Sigmoid colon (tissue), 7 donors: ENCODE measurements at regions of chr10 and their contacts with region 1.

Region 1: GRCh38 chr10:44974628-44975431 is 3.8 kb downstream of the DEPP1 start:
- DNase-seq: peak; percentile 89
- H3K4me3 ChIP-seq: peak overlapping the region; percentile 54 to 64 (median 54)
- H3K27ac ChIP-seq: peak overlapping the region; percentile 88 to 92 (median 90)
- H3K4me1 ChIP-seq: peaks cover 0 to 68% (median 62%) of the 10 kb centered on the region in 4 donors
- H3K27me3 ChIP-seq: no peaks in the 10 kb centered on the region
- CTCF ChIP-seq: peak; percentile 53 to 98 (median 91)
- EP300 ChIP-seq: no peak
- POLR2A ChIP-seq: no peak

Region 2: GRCh38 chr10:44761076-44761475 is 213.8 kb before region 1 on chr10:
- intact Hi-C with region 1: no loop called
- DNase-seq: no peak
- H3K4me3 ChIP-seq: no peak overlapping the region
- H3K27ac ChIP-seq: no peak overlapping the region
- H3K4me1 ChIP-seq: peaks cover 0 to 9% (median 0%) of the 10 kb centered on the region in 4 donors
- H3K27me3 ChIP-seq: no peaks in the 10 kb centered on the region
- CTCF ChIP-seq: no peak
- EP300 ChIP-seq: no peak
- POLR2A ChIP-seq: no peak

Region 3: GRCh38 chr10:44878706-44879530 is 95.9 kb before region 1 on chr10:
- intact Hi-C with region 1: loop called (anchors 5 kb)
- DNase-seq: peak; percentile 95
- H3K4me3 ChIP-seq: peak overlapping the region; percentile 27 to 51 (median 46)
- H3K27ac ChIP-seq: peak overlapping the region; percentile 77 to 91 (median 78)
- H3K4me1 ChIP-seq: peaks cover 0 to 17% (median 13%) of the 10 kb centered on the region in 4 donors
- H3K27me3 ChIP-seq: no peaks in the 10 kb centered on the region
- CTCF ChIP-seq: no peak
- EP300 ChIP-seq: peak in 1 of 4 donors; percentile 39
- POLR2A ChIP-seq: no peak

Region 4: DNA sequence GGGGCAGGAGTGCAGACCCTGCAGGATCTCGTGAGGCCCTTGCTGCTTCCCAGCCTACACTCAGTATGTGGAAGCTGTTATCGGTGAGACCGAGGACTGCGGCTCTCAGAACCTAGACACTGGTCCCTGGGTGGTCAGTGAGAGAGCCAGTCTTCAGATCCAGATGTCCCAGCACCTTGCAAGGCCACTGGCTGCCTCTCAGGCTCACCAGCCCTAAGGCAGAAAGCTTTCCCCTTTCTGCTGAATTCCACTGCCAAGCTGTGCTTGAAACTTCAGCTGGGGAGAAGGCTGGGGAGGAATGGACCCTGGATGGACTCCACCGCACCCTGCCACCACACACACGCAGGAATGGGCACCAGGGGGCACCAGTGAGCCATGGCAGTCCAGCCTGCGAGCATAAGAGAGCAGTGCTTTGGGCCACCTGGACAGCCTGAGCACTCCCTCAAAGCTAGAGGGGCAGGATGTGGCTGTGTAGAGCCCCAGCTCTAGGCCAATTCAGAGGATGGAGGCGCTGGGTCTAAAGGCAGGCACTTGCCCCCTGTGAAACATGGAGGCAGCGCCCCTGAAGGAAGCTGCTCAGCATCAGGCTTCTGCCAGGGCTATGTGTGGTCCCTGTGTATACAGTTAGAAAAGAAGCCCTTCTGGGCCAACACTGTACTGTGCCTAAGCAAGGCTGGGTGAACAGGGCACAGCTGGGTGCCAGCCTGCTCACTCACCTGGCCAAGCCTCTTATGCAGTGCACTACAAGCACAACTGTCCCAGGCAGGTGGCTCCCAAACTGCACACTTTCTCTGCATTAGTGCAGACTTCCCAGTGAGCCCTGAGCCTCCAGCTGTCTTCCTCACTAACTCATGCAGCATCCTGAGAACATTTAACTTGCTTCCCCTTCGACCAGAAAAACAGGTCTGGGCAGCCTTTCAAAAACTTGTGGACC is 42.0 kb before region 1 on chr10:
- intact Hi-C with region 1: loop called (anchors 1 kb)
- DNase-seq: peak; percentile 93
- H3K4me3 ChIP-seq: no peak overlapping the region
- H3K27ac ChIP-seq: peak overlapping the region in 2 of 4 donors; percentile 1 to 16
- H3K4me1 ChIP-seq: peaks cover 0 to 38% (median 28%) of the 10 kb centered on the region in 4 donors
- H3K27me3 ChIP-seq: no peaks in the 10 kb centered on the region
- CTCF ChIP-seq: peak; percentile 92 to 96 (median 96)
- EP300 ChIP-seq: no peak
- POLR2A ChIP-seq: no peak